Cardiac septum (tissue), 1 donor: ENCODE measurements at regions of chr7 and their contacts with region 1.

Region 1: DNA sequence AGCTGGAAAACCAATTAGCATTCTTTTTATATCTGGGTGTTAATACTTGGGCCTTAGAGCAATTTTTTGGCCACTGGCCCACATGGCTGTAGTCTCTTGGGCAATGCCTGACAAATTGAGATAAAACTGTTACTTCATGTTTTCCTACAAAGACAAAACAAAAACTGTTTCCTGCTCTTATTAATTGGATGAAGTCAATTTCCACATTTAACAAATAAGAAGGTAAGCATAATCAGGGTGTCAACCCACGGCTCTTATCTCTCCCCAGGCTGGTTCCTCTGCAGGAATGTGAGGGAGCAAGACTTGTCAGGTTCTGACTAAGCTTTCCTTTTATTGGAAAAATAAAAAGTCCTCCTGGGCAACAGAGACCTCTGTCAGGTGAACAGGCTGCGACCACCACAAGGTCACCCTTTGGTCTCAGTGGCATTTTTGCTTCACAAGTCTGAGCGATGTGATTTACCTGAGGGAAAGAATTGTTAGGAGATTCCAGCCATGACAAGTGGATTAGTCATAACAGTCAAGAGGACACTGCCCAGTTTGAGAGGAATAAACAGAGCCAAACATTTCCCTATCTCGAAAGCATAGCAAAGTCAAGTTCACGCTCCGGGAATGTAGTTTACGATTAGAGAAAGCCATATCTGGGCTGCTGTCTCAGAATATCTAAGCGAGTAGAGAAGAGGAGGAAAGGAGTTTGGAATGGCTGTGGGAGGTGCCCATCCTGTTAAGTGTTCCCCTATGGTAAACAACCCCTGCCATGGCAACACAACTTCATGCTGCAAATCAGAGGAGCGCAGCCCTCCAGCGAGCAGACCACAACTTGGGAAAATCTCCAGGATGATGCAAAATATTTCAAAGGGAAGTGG is 144.4 kb downstream of the TES start:
- DNase-seq: peak; percentile 83

Region 2: DNA sequence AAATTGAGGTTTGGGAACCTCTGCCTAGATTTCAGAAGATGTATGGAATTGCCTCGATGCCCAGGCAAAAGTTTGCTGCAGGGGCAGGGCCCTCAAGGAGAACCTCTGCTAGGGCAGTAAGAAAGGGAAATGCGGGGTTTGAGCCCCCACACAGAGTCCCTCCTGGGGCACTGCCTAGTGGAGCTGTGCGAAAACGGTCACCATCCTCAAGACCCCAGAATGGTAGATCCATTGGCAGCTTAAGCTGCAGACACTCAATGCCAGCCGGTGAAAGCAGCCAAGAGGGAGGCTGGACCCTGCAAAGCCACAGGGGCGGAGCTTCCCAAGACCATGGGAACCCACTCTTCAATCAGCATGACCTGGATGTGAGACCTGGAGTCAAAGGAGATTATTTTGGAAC is 309.2 kb before region 1 on chr7:
- intact Hi-C with region 1: no loop called
- DNase-seq: no peak

Region 3: GRCh38 chr7:116393654-116394053 is 38.9 kb after region 1 on chr7:
- intact Hi-C with region 1: loop called (anchors 2 kb)
- DNase-seq: no peak

Region 4: GRCh38 chr7:116407165-116407564 is 52.4 kb after region 1 on chr7:
- intact Hi-C with region 1: no loop called
- DNase-seq: no peak